HEK293 (cell line): ENCODE measurements at regions of chr5 and their contacts with region 1.

Region 1: GRCh38 chr5:132190161-132190817 is 37.4 kb downstream of the P4HA2 start:
- H3K4me3 ChIP-seq: no peak overlapping the region
- H3K27ac ChIP-seq: no peak overlapping the region
- H3K4me1 ChIP-seq: no peaks in the 10 kb centered on the region
- CTCF ChIP-seq: peak; percentile 74

Region 2: DNA sequence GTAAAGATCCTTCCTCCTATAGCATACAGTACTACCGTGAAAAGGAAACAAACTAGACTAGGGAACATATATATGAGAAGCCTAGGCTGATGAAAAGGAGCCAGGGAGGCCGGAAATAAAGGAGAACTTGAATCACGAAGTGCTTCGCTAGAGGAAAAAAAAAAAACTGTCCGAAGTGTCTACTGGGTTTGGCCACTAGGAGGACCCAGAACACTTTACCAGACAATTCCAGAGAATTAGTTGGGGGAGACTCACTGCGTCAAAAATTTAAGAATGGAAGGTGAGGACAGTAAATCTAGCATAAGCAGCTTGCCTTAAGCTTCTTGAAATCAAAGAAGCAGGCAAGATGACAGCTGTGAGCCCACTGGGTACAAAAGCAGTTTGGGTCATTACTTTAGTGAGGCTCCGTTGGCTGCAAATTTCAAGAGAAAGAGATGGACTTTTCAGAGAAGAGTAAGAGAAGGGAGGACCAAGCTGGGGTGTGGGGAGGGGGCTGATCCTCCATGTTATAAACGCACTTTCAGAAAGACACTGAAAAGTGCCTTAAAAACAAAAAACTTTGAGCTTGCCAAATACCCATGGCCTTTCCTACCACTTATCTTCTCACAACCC is 10.0 kb before region 1 on chr5:
- CTCF ChIA-PET with region 1: interaction called, 38 read pairs
- POLR2A ChIA-PET with region 1: no interaction called
- H3K4me3 ChIP-seq: no peak overlapping the region
- H3K27ac ChIP-seq: no peak overlapping the region
- H3K4me1 ChIP-seq: no peaks in the 10 kb centered on the region
- CTCF ChIP-seq: peak; percentile 42; the same call in 1 of the 2 replicates

Region 3: GRCh38 chr5:132205385-132206125 is 15.3 kb after region 1 on chr5:
- CTCF ChIA-PET with region 1: interaction called, 15 read pairs
- POLR2A ChIA-PET with region 1: interaction called, 3 read pairs
- H3K4me3 ChIP-seq: no peak overlapping the region
- H3K27ac ChIP-seq: no peak overlapping the region
- H3K4me1 ChIP-seq: no peaks in the 10 kb centered on the region
- CTCF ChIP-seq: no peak

Region 4: GRCh38 chr5:132215329-132215728 is 25.0 kb after region 1 on chr5:
- CTCF ChIA-PET with region 1: interaction called, 20 read pairs
- POLR2A ChIA-PET with region 1: interaction called, 3 read pairs
- H3K4me3 ChIP-seq: no peak overlapping the region
- H3K27ac ChIP-seq: no peak overlapping the region
- H3K4me1 ChIP-seq: 0 out of 2 replicates have a peak, but pooled peaks cover 2% of the 10 kb centered on the region
- CTCF ChIP-seq: no peak

Region 5: GRCh38 chr5:132227485-132228240 is 37.4 kb after region 1 on chr5 and contains the start of gene P4HA2:
- CTCF ChIA-PET with region 1: interaction called, 12 read pairs
- POLR2A ChIA-PET with region 1: no interaction called
- H3K4me3 ChIP-seq: peak within 1 kb of the TSS; percentile 58
- H3K27ac ChIP-seq: peak within 1 kb of the TSS; percentile 57; the same call in 1 of the 2 replicates
- H3K4me1 ChIP-seq: peaks cover 4% of the 10 kb centered on the region
- CTCF ChIP-seq: no peak; the same call in none of the 2 replicates